Ascending aorta (tissue), 2 donors: ENCODE measurements at regions of chr13 and their contacts with region 1.

Region 1: DNA sequence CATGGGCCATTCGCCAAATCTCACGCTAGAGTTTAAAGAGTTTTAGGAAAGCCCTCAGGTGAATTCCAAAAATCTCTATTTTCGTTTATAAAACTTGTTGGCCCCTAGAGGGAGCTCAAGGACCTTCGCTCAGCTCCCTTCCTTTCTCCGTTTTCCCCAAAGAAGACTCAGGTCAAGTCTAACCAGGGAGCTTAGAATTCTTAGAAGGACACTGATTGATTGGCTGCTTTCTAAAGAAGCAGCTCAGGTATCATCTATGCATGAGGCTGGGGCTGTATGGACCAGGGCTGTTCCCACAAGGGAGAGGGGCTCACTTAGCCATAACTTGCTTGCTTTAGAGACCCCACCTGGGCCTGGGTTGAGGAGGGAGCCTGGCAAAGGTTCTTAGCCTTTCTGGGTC is 20.5 kb downstream of the DZIP1 start:
- DNase-seq: no peak
- H3K4me3 ChIP-seq: no peak overlapping the region
- H3K27ac ChIP-seq: no peak overlapping the region
- H3K4me1 ChIP-seq: no peaks in the 10 kb centered on the region
- H3K27me3 ChIP-seq: no peaks in the 10 kb centered on the region
- CTCF ChIP-seq: peak; percentile 24 to 73 (median 46)

Region 2: DNA sequence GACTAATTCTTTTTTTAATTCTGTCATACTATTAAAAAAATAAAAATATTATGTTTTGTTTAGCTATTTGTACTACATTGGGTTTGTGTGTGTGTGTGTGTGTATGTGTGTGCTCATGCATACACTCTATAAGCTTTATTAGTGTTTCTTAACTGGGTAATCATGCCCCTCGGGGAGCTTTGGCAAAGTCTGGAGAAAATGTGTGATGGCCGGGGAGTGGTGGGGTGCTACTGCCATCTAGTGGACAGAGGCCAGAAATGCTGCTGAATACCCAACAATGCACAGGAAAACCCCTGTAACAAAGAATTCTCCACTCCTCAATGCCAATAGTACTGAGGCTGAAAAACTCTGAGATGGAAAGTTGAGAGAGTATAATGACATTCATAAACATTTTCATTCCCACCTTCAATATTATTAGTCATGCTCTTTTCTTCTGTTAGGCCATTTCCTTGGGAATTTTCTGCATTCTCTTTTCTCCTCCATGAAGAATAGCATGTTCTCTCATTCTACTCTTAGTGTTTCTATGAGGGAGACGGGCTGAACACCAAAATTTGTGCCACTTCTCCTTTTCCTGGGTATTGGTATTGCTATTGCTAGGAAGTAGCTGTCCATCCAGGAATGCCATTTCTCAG is 210.2 kb after region 1 on chr13:
- intact Hi-C with region 1: loop called (anchors 1 kb)
- DNase-seq: no peak
- H3K4me3 ChIP-seq: no peak overlapping the region
- H3K27ac ChIP-seq: no peak overlapping the region
- H3K4me1 ChIP-seq: no peaks in the 10 kb centered on the region
- H3K27me3 ChIP-seq: no peaks in the 10 kb centered on the region
- CTCF ChIP-seq: peak; percentile 83 to 88 (median 83)